Mammary epithelial cell (primary cell): ENCODE measurements at regions of chr1 and their contacts with region 1.

Region 1: DNA sequence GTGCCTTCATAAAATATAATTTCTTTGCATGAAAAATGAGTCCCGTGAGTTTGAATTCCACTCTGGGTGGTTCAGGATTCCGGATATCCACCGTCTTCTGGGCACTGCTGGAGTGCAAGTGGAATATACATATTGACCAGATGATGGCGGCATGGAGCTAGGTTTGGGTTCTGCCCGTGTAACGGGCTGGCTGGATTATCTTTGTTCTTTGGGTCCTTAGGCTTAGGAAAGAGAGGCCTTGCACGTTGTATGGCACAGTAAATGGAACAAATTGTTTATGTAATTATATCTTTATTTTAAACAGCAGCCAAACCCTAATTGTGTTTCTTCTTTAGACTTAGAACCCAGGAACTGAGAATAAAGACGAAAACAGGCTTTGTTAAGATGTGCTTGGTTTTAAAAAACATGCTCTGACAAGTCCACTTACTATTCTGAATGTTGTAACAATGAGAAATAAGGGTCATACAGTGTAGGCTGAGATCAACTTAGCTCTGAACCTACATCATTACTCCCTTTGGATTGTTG is 13.5 kb upstream of the ACBD6 start:
- DNase-seq: peak; percentile 72
- H3K4me3 ChIP-seq: peak overlapping the region in 2 of 3 experiments; percentile 11 to 35
- H3K27ac ChIP-seq: peak overlapping the region; percentile 67
- H3K4me1 ChIP-seq: peaks cover 14% of the 10 kb centered on the region
- H3K27me3 ChIP-seq: no peaks in the 10 kb centered on the region
- CTCF ChIP-seq: peak; percentile 75 to 80

Region 2: DNA sequence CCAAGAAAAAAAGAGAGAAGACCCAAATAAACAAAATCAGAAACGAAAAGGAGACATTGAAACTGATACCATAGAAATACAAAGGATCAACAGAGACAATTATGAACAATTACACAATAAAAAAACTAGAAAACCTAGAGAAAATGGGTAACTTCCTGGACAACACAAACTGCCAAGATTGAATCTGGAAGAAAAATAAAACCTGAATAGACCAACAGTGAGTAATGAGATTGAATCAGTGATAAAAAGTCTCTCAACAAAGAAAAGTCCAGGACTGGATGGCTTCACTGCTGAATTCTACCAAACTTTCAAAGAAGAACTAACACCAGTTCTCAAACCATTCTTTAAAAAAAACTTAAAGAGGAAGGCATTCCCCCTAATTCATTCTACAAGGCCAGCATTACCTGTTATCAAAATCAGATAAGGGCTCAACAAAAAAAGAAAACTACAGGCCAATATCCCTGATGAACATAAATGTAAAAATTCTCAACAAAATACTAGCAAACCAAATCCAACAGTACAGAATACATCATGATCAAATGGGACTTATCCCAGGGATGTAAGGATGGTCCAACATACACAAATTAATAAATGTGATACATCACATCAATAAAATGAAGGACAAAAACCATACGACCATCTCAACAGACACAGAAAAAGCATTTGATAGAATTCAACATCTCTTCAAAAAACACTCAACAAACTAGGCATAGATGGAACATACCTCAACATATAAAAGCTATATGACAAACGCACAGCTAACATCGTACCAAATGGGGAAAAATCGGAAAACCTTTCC is 133.4 kb before region 1 on chr1:
- CTCF ChIA-PET with region 1: no interaction called
- dilution Hi-C with region 1: no loop called
- in situ Hi-C with region 1: no loop called
- intact Hi-C with region 1: no loop called
- DNase-seq: peak; percentile 59
- H3K4me3 ChIP-seq: no peak overlapping the region
- H3K27ac ChIP-seq: no peak overlapping the region
- H3K4me1 ChIP-seq: no peaks in the 10 kb centered on the region
- H3K27me3 ChIP-seq: no peaks in the 10 kb centered on the region
- CTCF ChIP-seq: no peak

Region 3: GRCh38 chr1:180631766-180632325 is 115.9 kb after region 1 on chr1 and contains the start of gene XPR1:
- CTCF ChIA-PET with region 1: no interaction called
- dilution Hi-C with region 1: no loop called
- in situ Hi-C with region 1: loop called in 1 of 2 experiments (anchors 10 kb)
- intact Hi-C with region 1: loop called (anchors 1 kb)
- DNase-seq: peak; percentile 97
- H3K4me3 ChIP-seq: peak within 1 kb of the TSS; percentile 83 to 99 (median 96)
- H3K27ac ChIP-seq: peak within 1 kb of the TSS; percentile 64
- H3K4me1 ChIP-seq: peaks cover 13% of the 10 kb centered on the region
- H3K27me3 ChIP-seq: no peaks in the 10 kb centered on the region
- CTCF ChIP-seq: peak; percentile 13 to 38
- total RNA-seq, gene XPR1: 44.1 to 109 TPM

Region 4: DNA sequence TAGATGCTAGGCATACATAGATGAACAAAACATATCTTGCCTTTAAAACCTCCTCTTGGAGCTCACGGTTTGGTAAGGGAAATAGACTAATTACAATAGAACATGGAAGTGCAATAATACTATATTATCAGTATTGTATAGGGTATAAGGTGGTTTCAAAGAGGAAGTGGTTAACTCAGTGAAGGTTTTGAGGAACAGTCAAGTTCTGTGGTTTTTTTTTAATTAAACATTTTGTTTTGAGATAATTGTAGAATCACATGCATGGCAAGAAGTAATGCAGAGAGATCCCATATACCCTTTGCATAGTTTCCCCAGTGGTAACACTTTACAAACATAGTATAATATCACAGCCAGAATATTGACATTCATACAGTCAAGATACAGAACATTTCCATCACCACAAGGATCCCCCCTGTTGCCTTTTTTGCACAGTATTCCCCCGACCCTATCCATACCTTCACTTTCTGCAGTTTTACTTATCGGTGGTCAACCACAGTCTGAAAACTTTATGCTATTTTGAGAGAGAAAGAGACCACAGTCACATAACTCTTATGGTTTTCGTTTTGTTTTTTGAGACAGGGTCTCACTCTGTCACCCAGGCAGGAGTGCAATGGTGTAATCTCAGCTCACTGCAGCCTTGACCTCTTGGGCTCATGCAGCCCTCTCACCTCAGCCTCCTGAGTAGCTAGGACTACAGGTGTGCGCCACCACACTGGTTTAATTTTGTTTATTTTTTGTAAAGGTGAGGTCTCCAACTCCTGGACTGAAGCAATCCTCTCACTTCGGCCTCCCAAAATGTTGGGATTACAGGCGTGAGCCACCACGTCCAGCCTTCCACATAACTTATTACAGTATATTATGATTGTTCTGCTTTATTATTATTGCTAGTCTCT is 336.3 kb after region 1 on chr1:
- CTCF ChIA-PET with region 1: no interaction called
- dilution Hi-C with region 1: no loop called
- in situ Hi-C with region 1: loop called in 1 of 2 experiments (anchors 10 kb)
- intact Hi-C with region 1: no loop called
- DNase-seq: no peak
- H3K4me3 ChIP-seq: no peak overlapping the region
- H3K27ac ChIP-seq: no peak overlapping the region
- H3K4me1 ChIP-seq: peaks cover 12% of the 10 kb centered on the region
- H3K27me3 ChIP-seq: no peaks in the 10 kb centered on the region
- CTCF ChIP-seq: no peak

Region 5: GRCh38 chr1:181033799-181034451 is 518.0 kb after region 1 on chr1 and contains the start of gene MR1:
- CTCF ChIA-PET with region 1: no interaction called
- dilution Hi-C with region 1: no loop called
- in situ Hi-C with region 1: no loop called
- intact Hi-C with region 1: loop called (anchors 5 kb)
- DNase-seq: peak; percentile 86
- H3K4me3 ChIP-seq: peak within 1 kb of the TSS; percentile 61 to 62 (median 62)
- H3K27ac ChIP-seq: peak within 1 kb of the TSS; percentile 94
- H3K4me1 ChIP-seq: peaks cover 21% of the 10 kb centered on the region
- H3K27me3 ChIP-seq: no peaks in the 10 kb centered on the region
- CTCF ChIP-seq: no peak
- total RNA-seq, gene MR1: 20.4 to 46.3 TPM

Region 6: GRCh38 chr1:181424786-181425403 is 909.0 kb after region 1 on chr1:
- CTCF ChIA-PET with region 1: no interaction called
- dilution Hi-C with region 1: no loop called
- in situ Hi-C with region 1: no loop called
- intact Hi-C with region 1: loop called (anchors 10 kb)
- DNase-seq: peak; percentile 42
- H3K4me3 ChIP-seq: no peak overlapping the region
- H3K27ac ChIP-seq: no peak overlapping the region
- H3K4me1 ChIP-seq: no peaks in the 10 kb centered on the region
- H3K27me3 ChIP-seq: no peaks in the 10 kb centered on the region
- CTCF ChIP-seq: peak; percentile 97 to 99